Transverse colon (tissue), 4 donors: ENCODE measurements at regions of chr11 and their contacts with region 1.

Region 1: GRCh38 chr11:131511794-131512193 is 141.4 kb downstream of the NTM start:
- DNase-seq: peak; percentile 42
- H3K4me3 ChIP-seq: no peak overlapping the region
- H3K27ac ChIP-seq: no peak overlapping the region
- H3K4me1 ChIP-seq: no peaks in the 10 kb centered on the region
- H3K27me3 ChIP-seq: no peaks in the 10 kb centered on the region
- CTCF ChIP-seq: peak; percentile 48 to 55 (median 50)
- EP300 ChIP-seq: no peak
- POLR2A ChIP-seq: no peak

Region 2: DNA sequence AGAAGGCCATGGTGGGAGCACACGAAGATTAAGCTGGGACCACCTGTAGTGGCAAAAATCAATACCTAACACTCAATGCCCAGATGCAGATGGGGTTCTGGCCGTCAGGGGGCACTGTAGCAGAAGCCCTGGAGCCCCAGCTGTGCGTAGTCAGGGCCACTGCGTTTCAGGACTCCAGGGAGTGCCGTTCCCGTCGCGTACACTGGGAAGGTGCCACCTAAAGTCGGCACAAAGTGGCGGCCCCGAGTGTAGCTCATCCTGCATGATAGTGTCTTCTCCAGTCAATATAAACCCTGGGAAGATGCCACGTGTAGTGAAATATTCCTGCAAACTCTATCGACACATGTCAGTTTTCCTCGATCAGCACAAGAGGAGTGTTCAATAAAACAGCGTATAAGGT is 265.1 kb before region 1 on chr11:
- in situ Hi-C with region 1: loop called in 1 of 4 experiments (anchors 25 kb)
- intact Hi-C with region 1: no loop called
- DNase-seq: peak; percentile 50
- H3K4me3 ChIP-seq: no peak overlapping the region
- H3K27ac ChIP-seq: no peak overlapping the region
- H3K4me1 ChIP-seq: peaks cover 0 to 3% (median 0%) of the 10 kb centered on the region in 4 donors
- H3K27me3 ChIP-seq: peaks cover 3% of the 10 kb centered on the region
- CTCF ChIP-seq: peak; percentile 21 to 53 (median 48)
- EP300 ChIP-seq: no peak
- POLR2A ChIP-seq: no peak

Region 3: GRCh38 chr11:131418189-131418588 is 93.6 kb before region 1 on chr11:
- in situ Hi-C with region 1: no loop called
- intact Hi-C with region 1: loop called (anchors 10 kb)
- DNase-seq: no peak
- H3K4me3 ChIP-seq: no peak overlapping the region
- H3K27ac ChIP-seq: no peak overlapping the region
- H3K4me1 ChIP-seq: no peaks in the 10 kb centered on the region
- H3K27me3 ChIP-seq: no peaks in the 10 kb centered on the region
- CTCF ChIP-seq: no peak
- EP300 ChIP-seq: no peak
- POLR2A ChIP-seq: no peak

Region 4: GRCh38 chr11:131703311-131703710 is 191.5 kb after region 1 on chr11:
- in situ Hi-C with region 1: no loop called
- intact Hi-C with region 1: no loop called
- DNase-seq: no peak
- H3K4me3 ChIP-seq: no peak overlapping the region
- H3K27ac ChIP-seq: no peak overlapping the region
- H3K4me1 ChIP-seq: no peaks in the 10 kb centered on the region
- H3K27me3 ChIP-seq: no peaks in the 10 kb centered on the region
- CTCF ChIP-seq: no peak
- EP300 ChIP-seq: no peak
- POLR2A ChIP-seq: no peak